ENCODE measurements at regions of chr3 and their contacts with region 1.

Region 1: DNA sequence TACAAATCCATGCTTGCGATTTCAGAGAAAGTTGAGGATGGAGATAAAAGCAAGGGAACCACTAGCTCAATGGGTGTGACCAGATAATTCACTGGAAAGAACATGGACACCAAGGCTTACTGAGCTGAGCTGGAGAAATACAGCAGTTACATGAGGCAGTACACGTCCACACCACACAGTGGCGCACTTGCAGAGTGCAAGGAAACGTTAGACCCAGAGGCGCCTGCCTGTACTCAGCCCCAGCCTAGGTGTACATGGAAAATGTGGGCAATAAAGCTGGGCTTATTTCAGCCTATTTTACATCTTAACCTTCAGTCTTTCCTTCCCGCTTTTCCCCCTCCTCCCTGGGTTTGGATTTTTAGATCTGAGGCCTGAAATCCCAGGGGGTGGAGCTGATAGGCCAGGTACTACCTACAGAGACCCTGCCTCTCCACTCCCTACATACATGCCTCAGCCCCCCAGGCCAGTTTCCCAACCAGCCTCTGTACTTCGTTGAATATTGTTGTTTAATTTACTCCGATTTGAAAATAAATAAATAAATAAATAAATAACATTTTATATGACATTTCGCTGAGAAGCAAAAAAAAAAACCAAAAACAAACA is 60.1 kb downstream of the PCOLCE2 start:
- DNase-seq: peak; percentile 56 to 87 (median 80)
- H3K4me3 ChIP-seq: no peak overlapping the region
- H3K27ac ChIP-seq: no peak overlapping the region
- H3K27me3 ChIP-seq: no peaks in the 10 kb centered on the region
- CTCF ChIP-seq: peak; percentile 56 to 90 (median 80)

Region 2: GRCh38 chr3:142568393-142569017 is 260.3 kb before region 1 on chr3:
- intact Hi-C with region 1: no loop called
- DNase-seq: no peak
- H3K4me3 ChIP-seq: no peak overlapping the region
- H3K27ac ChIP-seq: no peak overlapping the region
- H3K27me3 ChIP-seq: no peaks in the 10 kb centered on the region
- CTCF ChIP-seq: no peak

Region 3: GRCh38 chr3:142705198-142705597 is 123.6 kb before region 1 on chr3:
- intact Hi-C with region 1: no loop called
- DNase-seq: no peak
- H3K4me3 ChIP-seq: no peak overlapping the region
- H3K27ac ChIP-seq: no peak overlapping the region
- H3K27me3 ChIP-seq: no peaks in the 10 kb centered on the region
- CTCF ChIP-seq: no peak

Region 4: DNA sequence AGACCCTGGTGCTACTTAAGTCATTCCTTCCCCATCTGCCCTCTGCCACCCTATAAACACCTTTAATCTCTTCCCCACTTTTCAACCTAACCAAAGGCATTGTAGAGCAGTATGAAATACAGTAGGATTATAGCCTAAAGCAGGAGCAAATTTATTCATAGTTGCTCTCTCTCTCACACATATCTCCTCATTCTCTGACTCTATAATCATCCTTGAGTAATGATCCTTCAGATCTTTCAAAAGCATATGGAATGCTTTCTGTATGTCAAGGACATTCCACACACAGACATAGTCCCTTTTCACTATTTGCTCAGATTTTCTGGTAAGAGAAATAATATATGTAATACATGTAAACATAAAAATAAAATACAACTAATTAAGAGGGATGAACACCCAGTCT is 50.9 kb before region 1 on chr3:
- intact Hi-C with region 1: no loop called
- DNase-seq: no peak
- H3K4me3 ChIP-seq: no peak overlapping the region
- H3K27ac ChIP-seq: no peak overlapping the region
- H3K27me3 ChIP-seq: no peaks in the 10 kb centered on the region
- CTCF ChIP-seq: no peak

Region 5: GRCh38 chr3:142963516-142964448 is 135.0 kb after region 1 on chr3 and contains the start of gene PAQR9:
- intact Hi-C with region 1: no loop called
- DNase-seq: peak in 6 of 10 donors; percentile 14 to 61 (median 42)
- H3K4me3 ChIP-seq: peak within 1 kb of the TSS; percentile 26 to 79 (median 63)
- H3K27ac ChIP-seq: peak within 1 kb of the TSS in 20 of 59 donors; percentile 23 to 82 (median 48)
- H3K27me3 ChIP-seq: peaks cover 0 to 47% (median 10%) of the 10 kb centered on the region in 45 donors
- CTCF ChIP-seq: no peak
- total RNA-seq, gene PAQR9: 2.1 to 17.1 (median 9.4) TPM

Region 6: GRCh38 chr3:142993958-142994442 is 165.2 kb after region 1 on chr3:
- intact Hi-C with region 1: loop called (anchors 5 kb)
- DNase-seq: peak in 8 of 10 donors; percentile 34 to 75 (median 48)
- H3K4me3 ChIP-seq: no peak overlapping the region
- H3K27ac ChIP-seq: no peak overlapping the region
- H3K27me3 ChIP-seq: peaks cover 0 to 2% (median 0%) of the 10 kb centered on the region in 45 donors
- CTCF ChIP-seq: peak; percentile 60 to 89 (median 75)

Measured in dorsolateral prefrontal cortex (tissue), 120 donors.